K562 (cell line): ENCODE measurements at regions of chr9 and their contacts with region 1.

Region 1: GRCh38 chr9:132984202-132985070 is 5.9 kb downstream of the GFI1B start:
- DNase-seq: peak; percentile 94 to 96 (median 95)
- ATAC-seq: peak; percentile 80
- H3K4me3 ChIP-seq: peak overlapping the region; percentile 27
- H3K27ac ChIP-seq: peak overlapping the region; percentile 85
- H3K4me1 ChIP-seq: peaks cover 43 to 74% of the 10 kb centered on the region in 2 experiments
- H3K27me3 ChIP-seq: no peaks in the 10 kb centered on the region
- CTCF ChIP-seq: no peak
- EP300 ChIP-seq: peak; percentile 85
- POLR2A ChIP-seq: 0 out of 2 replicates have a peak, but pooled peaks have one; percentile 22
- RAD21 ChIP-seq: no peak; a peak in 1 of 4 replicates

Region 2: DNA sequence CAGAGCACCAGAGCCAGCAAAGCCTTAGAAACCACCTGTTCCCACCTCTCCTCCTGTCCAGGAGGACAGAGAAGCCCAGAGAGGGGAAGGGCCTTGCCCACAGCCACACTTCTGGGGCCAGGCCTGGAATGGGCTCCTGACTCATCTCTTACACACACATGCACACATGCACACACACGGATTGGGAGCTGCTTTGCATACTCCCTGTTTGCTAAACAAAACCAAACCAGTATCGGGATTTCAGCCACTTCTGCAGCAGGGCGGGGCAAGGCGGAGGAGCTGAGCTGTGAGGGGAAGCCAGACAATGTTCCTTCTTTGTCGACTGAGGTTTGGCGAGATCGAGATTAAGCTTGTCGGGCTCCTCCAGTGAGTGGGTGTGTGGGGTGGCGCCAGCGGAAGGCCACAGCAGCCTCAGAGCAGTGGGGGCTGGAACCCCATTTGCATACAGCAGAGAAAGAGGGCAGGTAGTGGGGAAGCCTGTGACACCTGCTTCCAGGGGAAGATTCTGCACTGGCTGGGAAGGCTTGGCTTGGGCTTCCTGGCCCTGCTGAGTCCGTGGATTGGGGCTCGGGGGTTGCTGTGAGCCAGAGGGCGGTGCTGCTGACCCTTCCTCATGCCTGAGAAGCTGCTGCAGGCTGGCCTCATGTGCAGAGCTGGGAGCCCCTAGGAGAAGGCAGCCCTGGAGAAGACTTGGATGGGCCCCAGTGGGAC is 10.1 kb after region 1 on chr9:
- CTCF ChIA-PET with region 1: interaction called, 3 read pairs
- POLR2A ChIA-PET with region 1: interaction called, 12 read pairs
- in situ Hi-C with region 1: no loop called
- intact Hi-C with region 1: no loop called
- DNase-seq: peak; percentile 72 to 95 (median 80)
- ATAC-seq: peak; percentile 89
- H3K4me3 ChIP-seq: no peak overlapping the region
- H3K27ac ChIP-seq: peak overlapping the region; percentile 40; the same call in 1 of the 3 replicates
- H3K4me1 ChIP-seq: peaks cover 54 to 68% of the 10 kb centered on the region in 2 experiments
- H3K27me3 ChIP-seq: no peaks in the 10 kb centered on the region
- CTCF ChIP-seq: no peak
- EP300 ChIP-seq: peak; percentile 83
- POLR2A ChIP-seq: no peak
- RAD21 ChIP-seq: peak in 1 of 2 experiments; percentile 15; a peak in 1 of 4 replicates

Region 3: GRCh38 chr9:133004091-133004998 is 19.9 kb after region 1 on chr9:
- CTCF ChIA-PET with region 1: no interaction called
- POLR2A ChIA-PET with region 1: interaction called, 7 read pairs
- in situ Hi-C with region 1: no loop called
- intact Hi-C with region 1: loop called (anchors 2 kb)
- DNase-seq: peak; percentile 89 to 97 (median 94)
- ATAC-seq: peak; percentile 82
- H3K4me3 ChIP-seq: peak overlapping the region; percentile 4; the same call in 1 of the 2 replicates
- H3K27ac ChIP-seq: peak overlapping the region; percentile 90
- H3K4me1 ChIP-seq: peaks cover 57 to 71% of the 10 kb centered on the region in 2 experiments
- H3K27me3 ChIP-seq: no peaks in the 10 kb centered on the region
- CTCF ChIP-seq: peak in 2 of 3 experiments; percentile 25 to 33; a peak in 2 of 6 replicates
- EP300 ChIP-seq: peak; percentile 98
- POLR2A ChIP-seq: no peak
- RAD21 ChIP-seq: peak; percentile 39 to 43

Region 4: GRCh38 chr9:133199648-133200321 is 215.3 kb after region 1 on chr9:
- CTCF ChIA-PET with region 1: no interaction called
- POLR2A ChIA-PET with region 1: no interaction called
- in situ Hi-C with region 1: no loop called
- intact Hi-C with region 1: no loop called
- DNase-seq: no peak
- ATAC-seq: peak; percentile 42
- H3K4me3 ChIP-seq: no peak overlapping the region
- H3K27ac ChIP-seq: no peak overlapping the region
- H3K4me1 ChIP-seq: peaks cover 0 to 17% of the 10 kb centered on the region in 2 experiments; a peak in 2 of 5 replicates
- H3K27me3 ChIP-seq: peaks cover 59 to 75% of the 10 kb centered on the region in 2 experiments
- CTCF ChIP-seq: peak in 2 of 3 experiments; percentile 16 to 67; a peak in 3 of 6 replicates
- EP300 ChIP-seq: no peak
- POLR2A ChIP-seq: no peak
- RAD21 ChIP-seq: no peak